Activated naive CD8-positive, alpha-beta T cell treated with anti-CD3 and anti-CD28 coated beads, Interleukin-2, amount 10 ng/mL, durations not matched to agents 7 days and 5 days (primary cell): ENCODE measurements at regions of chr10 and their contacts with region 1.

Region 1: GRCh38 chr10:22340362-22341189 is 4.7 kb upstream of the SPAG6 start:
- DNase-seq: peak; percentile 85
- ATAC-seq: peak; percentile 64
- H3K4me3 Mint-ChIP-seq: peak overlapping the region; percentile 89
- H3K27ac Mint-ChIP-seq: peak overlapping the region; percentile 88
- H3K4me1 Mint-ChIP-seq: peaks cover 31% of the 10 kb centered on the region
- H3K27me3 Mint-ChIP-seq: peaks cover 79% of the 10 kb centered on the region

Region 2: GRCh38 chr10:22325272-22326144 is 15.1 kb before region 1 on chr10:
- POLR2A ChIA-PET with region 1: interaction called, 19 read pairs
- DNase-seq: peak; percentile 76
- ATAC-seq: peak; percentile 67
- H3K4me3 Mint-ChIP-seq: peak overlapping the region; percentile 87
- H3K27ac Mint-ChIP-seq: peak overlapping the region; percentile 60
- H3K4me1 Mint-ChIP-seq: peaks cover 33% of the 10 kb centered on the region
- H3K27me3 Mint-ChIP-seq: peaks cover 32% of the 10 kb centered on the region